ENCODE measurements at regions of chr5 and their contacts with region 1.

Region 1: DNA sequence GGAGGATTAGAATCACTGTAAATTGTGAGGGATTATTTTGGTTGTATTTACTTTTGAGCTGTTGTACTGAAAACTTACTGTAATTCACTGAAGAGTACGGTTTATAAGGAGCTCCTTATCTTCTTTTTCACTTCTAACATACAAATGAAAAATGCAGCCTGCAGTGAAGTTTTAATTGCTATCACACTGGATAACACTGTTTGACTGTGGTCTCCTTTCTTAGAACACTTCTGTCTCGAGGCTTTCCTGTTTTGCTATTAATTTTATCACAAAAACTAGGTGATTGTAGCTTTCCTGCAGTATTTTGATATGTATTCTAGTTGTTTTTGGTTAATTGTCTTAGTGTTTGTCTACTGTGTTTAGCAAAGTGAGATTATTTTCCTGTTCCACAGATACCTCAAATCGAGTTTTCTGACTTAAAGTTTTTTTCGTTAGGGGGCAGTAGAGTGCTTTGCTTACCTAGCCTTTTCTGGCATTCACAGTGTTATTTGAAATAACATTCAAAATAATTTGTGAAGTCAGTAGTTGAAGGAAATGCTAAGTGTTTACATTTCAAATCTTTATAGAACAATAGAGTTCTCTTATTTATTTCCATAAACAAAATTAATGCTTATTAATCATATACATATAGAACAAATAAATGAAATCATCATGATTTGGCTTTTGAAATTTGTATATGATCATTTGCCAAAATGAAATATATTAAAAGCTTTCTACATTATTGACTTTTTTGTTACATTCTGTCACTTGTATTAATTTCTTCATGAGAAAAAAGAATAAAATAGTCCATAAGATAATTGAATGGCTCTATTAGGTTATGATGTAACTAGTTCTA is 52.9 kb downstream of the COMMD10 start:
- DNase-seq: peak; percentile 65
- H3K4me3 Mint-ChIP-seq: no peak overlapping the region
- H3K27ac Mint-ChIP-seq: no peak overlapping the region
- H3K4me1 Mint-ChIP-seq: peaks cover 8% of the 10 kb centered on the region
- H3K27me3 Mint-ChIP-seq: no peaks in the 10 kb centered on the region

Region 2: DNA sequence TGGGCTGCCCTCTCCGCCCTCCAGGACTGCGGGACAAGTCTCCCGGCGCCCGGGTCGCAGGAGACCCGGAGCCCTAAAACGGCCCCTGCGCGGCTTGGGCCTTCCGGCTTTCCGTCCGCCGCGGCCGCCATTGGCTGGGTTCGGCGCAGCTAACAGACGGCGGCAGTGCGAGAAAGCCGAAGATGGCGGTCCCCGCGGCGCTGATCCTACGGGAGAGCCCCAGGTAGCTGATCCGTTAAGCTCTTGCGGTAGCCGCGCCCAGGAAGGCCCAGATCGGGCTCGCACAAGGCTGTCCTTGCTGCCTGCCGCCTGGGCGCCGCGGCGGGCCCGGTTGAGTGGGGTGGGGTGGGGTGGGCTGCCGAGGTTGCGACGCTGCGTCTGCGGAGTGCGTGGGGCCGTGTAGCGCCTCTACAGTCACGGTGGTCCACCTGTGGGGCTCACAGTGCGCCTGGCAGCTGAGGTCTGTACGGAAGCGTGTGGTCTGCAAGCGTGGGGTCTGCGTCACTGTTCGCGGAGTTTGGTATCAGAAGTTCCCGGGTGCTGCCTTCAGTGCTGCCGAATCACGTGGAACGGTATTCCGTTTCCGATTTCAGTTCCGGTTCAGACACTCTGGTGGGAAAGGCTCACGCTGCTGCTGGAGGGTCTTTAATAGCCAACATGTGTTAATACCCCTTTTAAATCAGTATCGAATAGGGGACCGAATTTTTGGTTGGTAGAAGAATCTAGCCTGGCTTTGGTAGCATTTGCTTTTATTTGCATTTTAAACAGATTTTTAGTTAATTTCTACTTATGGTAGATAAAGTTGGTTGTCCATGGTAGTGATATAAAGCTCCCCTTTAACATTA is 52.7 kb before region 1 on chr5 and contains the start of gene COMMD10:
- intact Hi-C with region 1: loop called (anchors 2 kb)
- DNase-seq: peak; percentile 94
- H3K4me3 Mint-ChIP-seq: peak within 1 kb of the TSS; percentile 88
- H3K27ac Mint-ChIP-seq: peak within 1 kb of the TSS; percentile 91
- H3K4me1 Mint-ChIP-seq: peaks cover 26% of the 10 kb centered on the region
- H3K27me3 Mint-ChIP-seq: peaks cover 2% of the 10 kb centered on the region
- total RNA-seq, gene COMMD10: 22.2 and 24.4 TPM in 2 replicates

Region 3: GRCh38 chr5:116313366-116313765 is 175.6 kb after region 1 on chr5:
- intact Hi-C with region 1: loop called (anchors 10 kb)
- DNase-seq: no peak
- H3K4me3 Mint-ChIP-seq: peak overlapping the region; percentile 54
- H3K27ac Mint-ChIP-seq: no peak overlapping the region
- H3K4me1 Mint-ChIP-seq: peaks cover 11% of the 10 kb centered on the region
- H3K27me3 Mint-ChIP-seq: no peaks in the 10 kb centered on the region

Region 4: GRCh38 chr5:116388564-116389258 is 250.9 kb after region 1 on chr5:
- intact Hi-C with region 1: no loop called
- DNase-seq: no peak
- H3K4me3 Mint-ChIP-seq: no peak overlapping the region
- H3K27ac Mint-ChIP-seq: no peak overlapping the region
- H3K4me1 Mint-ChIP-seq: no peaks in the 10 kb centered on the region
- H3K27me3 Mint-ChIP-seq: no peaks in the 10 kb centered on the region

Region 5: GRCh38 chr5:116947691-116948528 is 810.1 kb after region 1 on chr5:
- intact Hi-C with region 1: loop called (anchors 2 kb)
- DNase-seq: peak; percentile 88
- H3K4me3 Mint-ChIP-seq: no peak overlapping the region
- H3K27ac Mint-ChIP-seq: no peak overlapping the region
- H3K4me1 Mint-ChIP-seq: no peaks in the 10 kb centered on the region
- H3K27me3 Mint-ChIP-seq: no peaks in the 10 kb centered on the region